SK-MEL-5 (cell line): ENCODE measurements at regions of chr10 and their contacts with region 1.

Region 1: GRCh38 chr10:70331486-70332268 is 47.9 kb upstream of the NPFFR1 start:
- DNase-seq: peak; percentile 72

Region 2: DNA sequence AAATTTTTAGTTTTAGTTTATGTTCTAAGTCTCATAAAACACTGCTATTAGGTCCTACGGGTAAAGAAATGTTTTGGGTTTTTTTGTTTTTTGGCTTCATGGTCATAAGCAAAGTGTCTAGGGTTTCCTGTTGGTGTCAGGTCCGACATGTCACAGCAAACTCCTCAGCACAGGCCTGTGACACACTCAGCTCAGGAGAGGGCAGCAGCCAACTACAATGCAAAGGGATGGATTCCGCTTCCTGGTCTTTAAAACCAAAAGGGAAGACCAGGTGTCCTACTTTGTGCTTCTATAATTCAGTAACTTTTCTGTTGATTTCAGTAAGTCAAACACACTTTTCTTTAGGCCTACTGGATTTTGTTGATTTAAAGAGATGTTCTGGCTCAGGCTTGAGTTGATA is 362.8 kb before region 1 on chr10:
- in situ Hi-C with region 1: no loop called
- DNase-seq: no peak

Region 3: DNA sequence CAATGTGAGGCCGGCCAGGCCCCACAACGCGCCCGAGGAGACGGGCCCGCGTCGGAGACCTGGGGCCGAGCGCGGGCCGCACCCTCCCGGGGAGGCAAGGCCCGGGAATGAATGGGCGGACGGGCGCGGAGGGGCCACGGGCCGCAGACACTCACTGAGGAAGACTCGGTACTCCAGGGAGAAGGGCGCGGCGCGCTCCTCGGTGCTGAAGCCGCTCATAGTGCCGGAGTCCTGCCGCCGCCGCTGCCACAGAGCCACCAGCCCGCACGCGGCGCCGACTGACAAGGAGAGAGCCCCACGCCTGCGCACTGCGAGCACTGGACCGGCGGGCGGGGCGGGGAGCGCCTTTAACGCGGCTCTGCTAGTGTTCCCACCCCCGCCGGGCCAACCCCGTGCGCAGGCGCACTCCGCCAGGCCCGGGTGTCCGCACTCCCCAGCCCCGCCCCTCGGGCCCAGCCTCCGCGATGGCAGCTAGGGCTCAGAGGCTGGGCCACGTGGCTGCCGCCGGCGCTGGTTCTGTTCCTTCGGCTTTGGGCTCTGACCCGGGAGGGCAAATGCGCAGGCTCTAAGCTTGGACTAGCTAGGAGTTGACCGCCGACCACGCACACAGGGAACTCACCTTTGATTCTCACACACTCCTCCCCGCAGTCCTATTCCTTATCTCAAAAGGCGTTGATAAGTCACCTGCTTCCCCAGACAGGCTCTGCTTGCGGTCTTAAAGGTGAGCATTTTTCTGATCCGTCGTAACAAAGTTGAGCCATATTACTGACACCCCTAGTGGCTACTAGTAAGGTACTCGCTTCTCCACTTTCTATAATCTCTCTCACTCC is 98.4 kb before region 1 on chr10 and contains the start of gene PPA1:
- in situ Hi-C with region 1: loop called (anchors 25 kb)
- DNase-seq: peak; percentile 92
- total RNA-seq, gene PPA1: 157 and 183 TPM in 2 replicates

Region 4: DNA sequence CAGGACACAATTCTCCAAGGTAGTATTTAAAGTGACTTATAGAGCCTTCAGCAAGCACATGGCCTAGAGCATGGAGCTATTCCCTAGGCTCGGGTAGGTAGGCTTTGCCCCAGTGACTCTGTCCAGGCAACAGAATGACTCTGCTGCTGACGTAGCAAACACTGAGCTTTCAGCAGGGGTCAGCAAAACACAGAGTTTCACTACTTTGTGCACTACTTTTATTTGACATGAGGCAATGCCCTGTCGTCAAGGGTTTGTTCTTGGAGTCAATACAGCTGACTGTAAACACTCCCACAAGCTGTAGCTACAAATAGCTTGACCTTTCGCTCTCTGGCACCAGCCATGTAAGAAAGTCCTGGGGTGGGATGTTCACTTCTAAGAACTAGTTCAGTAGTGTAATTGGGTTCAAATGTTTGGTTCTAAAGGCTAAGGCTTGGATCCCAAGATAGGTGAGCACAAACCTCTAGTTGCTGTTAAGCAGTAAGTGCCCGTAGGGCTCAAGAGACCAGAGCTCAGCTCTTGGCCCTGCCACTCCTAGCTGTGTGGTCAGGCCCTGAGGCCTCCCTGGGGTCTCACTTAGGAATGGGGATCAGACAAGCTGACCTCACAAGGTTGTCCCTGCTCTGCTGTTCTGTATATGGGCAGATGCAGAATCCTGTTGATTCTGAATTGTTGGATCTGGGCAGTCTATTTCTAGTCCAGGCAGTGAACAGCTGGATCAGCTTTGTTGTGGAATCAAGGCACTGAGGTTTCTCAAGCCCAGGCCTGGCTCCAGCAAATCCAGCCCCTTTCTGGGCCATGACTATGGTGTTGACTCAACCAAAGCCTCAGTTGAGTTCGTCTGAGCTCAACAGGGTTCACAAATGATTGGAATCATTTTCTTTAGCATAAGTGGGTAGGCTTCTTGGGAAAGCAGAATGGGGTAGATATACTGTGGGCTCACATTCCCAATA is 99.1 kb after region 1 on chr10:
- in situ Hi-C with region 1: no loop called
- DNase-seq: peak; percentile 26